CD8-positive, alpha-beta T cell (primary cell): ENCODE measurements at regions of chr9 and their contacts with region 1.

Region 1: DNA sequence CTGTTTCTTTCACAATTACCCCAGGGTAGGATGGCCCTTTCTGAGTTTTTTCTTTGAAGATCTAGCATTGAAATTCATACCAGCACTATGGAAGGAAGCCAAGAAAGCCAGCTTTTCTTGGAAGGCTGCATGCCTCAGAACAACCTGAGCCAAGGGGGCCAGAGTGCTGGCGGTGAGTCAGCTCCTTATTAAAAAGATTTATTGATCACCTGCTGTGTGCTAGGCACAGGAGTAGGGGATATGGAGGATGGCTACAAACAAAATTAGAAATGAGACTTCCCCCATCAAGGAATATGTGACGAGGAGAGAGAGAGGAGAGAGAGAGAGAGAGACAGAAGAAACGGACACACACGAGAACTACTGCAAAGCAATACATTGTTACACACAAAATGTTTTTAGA is 184.6 kb upstream of the PUM3 start:
- DNase-seq: no peak
- ATAC-seq: no peak
- H3K4me3 ChIP-seq: no peak overlapping the region
- H3K4me3 Mint-ChIP-seq: no peak overlapping the region
- H3K27ac ChIP-seq: no peak overlapping the region
- H3K27ac Mint-ChIP-seq: no peak overlapping the region
- H3K4me1 ChIP-seq: no peaks in the 10 kb centered on the region
- H3K4me1 Mint-ChIP-seq: no peaks in the 10 kb centered on the region
- H3K27me3 ChIP-seq: no peaks in the 10 kb centered on the region
- H3K27me3 Mint-ChIP-seq: peaks cover 5% of the 10 kb centered on the region
- CTCF ChIP-seq: no peak

Region 2: DNA sequence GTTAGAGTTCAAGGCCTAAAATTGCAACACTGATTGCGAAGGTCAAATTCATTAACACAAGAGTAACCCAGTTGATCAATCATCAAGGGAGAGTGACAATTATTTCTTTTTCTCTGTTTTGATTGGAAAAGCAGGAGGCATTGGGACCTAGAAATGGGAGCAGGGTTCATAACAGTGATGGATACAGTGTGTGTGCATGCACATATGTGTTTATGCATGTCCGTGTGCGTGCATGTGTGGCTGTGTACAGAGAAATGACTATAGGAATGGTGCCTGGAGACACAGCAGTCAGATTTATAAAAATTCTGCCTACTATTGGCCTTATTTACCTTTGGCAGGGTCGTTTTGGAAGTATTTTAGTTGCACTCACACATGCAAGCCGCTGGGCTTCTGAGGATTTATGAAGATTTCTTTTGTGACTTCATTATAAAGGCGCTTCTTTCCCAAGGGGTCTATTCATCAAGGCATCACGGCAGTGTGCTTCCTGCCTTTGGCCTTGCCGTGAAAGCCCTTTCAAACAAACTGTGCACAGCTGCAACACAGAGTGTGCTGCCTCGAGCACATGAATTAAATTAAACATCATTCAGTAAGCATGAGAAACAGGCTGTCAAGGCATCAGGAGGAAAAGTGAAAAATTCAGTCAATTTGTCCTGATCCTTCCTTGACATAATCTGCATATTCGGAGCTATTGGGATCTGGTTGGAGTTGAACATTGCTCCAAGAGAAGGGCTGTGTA is 61.8 kb before region 1 on chr9:
- CTCF ChIA-PET with region 1: no interaction called
- POLR2A ChIA-PET with region 1: no interaction called
- intact Hi-C with region 1: loop called in 1 of 2 experiments (anchors 10 kb)
- DNase-seq: no peak
- ATAC-seq: no peak
- H3K4me3 ChIP-seq: no peak overlapping the region
- H3K4me3 Mint-ChIP-seq: no peak overlapping the region
- H3K27ac ChIP-seq: no peak overlapping the region
- H3K27ac Mint-ChIP-seq: no peak overlapping the region
- H3K4me1 ChIP-seq: no peaks in the 10 kb centered on the region
- H3K4me1 Mint-ChIP-seq: no peaks in the 10 kb centered on the region
- H3K27me3 ChIP-seq: no peaks in the 10 kb centered on the region
- H3K27me3 Mint-ChIP-seq: peaks cover 5% of the 10 kb centered on the region
- CTCF ChIP-seq: no peak